Activated T-helper 1 cell treated with anti-CD3 and anti-CD28 coated beads, Interleukin-12 subunit alpha, Interleukin-12 subunit beta, Interleukin-2, Interleukin-4 antibody, amounts not matched to agents 30 ng/mL and 10 ng/mL and 1 ng/mL, durations not matched to agents 14 hours and 24 hours and 36 hours (primary cell): ENCODE measurements at regions of chr13 and their contacts with region 1.

Region 1: DNA sequence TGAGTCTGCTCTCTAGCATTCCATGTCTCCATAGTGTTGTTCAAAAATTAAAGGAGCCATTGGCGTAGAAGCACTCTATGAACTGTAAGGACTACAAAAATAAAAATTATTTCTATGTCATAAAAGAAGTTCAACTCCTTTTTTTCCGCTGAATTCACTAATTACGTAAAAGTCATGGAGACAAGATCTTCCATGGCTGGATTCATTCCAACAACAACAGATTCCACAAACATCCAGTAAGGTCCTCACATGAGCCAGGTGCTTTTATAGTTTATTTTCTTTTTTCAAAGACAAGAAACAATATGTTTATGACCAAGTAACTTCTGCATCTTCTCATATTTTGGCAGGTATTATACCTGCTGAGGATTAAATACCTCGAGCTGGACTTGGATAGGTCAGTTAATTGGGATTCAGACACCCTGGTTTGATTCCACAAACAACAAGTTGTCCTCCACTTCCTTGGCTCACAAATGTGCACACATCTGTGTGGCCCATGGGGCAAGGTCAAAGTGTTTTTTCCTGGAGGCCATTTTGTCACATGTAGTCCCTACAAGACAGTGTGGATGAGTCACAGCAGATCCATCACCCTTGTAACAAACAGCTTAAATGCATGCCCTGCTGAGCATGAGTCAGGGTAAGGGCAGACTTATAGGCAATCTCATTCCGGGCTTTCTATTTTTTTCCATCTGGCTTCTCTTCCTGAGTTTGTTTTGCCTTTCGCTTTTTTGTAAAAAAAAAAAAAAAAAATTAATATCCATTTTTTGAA is 475.6 kb downstream of the COG6 start:
- DNase-seq: no peak
- H3K4me3 Mint-ChIP-seq: no peak overlapping the region
- H3K27ac Mint-ChIP-seq: peak overlapping the region; percentile 12
- H3K4me1 Mint-ChIP-seq: peaks cover 63% of the 10 kb centered on the region
- H3K27me3 Mint-ChIP-seq: no peaks in the 10 kb centered on the region

Region 2: DNA sequence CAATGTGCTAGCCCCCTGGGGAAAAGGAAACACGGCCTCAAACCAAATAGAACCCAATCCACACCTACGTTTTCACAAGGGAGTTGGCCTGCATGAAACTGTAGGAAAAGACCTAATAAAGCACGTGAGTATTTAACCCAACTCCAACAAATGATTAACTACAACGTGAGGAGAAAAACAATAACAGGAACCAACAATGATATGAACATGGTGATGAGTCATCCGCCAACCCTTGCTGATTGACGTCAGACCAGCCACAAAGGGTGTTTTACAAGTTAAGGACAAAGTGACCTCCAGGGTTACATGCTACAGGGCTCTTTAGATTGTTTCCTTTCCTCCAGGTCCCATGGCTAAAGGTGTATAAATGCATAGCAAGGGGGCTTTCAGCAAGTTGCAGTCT is 15.0 kb before region 1 on chr13:
- intact Hi-C with region 1: loop called (anchors 2 kb)
- DNase-seq: peak; percentile 51
- H3K4me3 Mint-ChIP-seq: peak overlapping the region; percentile 24
- H3K27ac Mint-ChIP-seq: peak overlapping the region; percentile 91
- H3K4me1 Mint-ChIP-seq: peaks cover 43% of the 10 kb centered on the region
- H3K27me3 Mint-ChIP-seq: no peaks in the 10 kb centered on the region

Region 3: GRCh38 chr13:40329657-40330485 is 198.8 kb after region 1 on chr13:
- intact Hi-C with region 1: no loop called
- DNase-seq: no peak
- H3K4me3 Mint-ChIP-seq: no peak overlapping the region
- H3K27ac Mint-ChIP-seq: no peak overlapping the region
- H3K4me1 Mint-ChIP-seq: peaks cover 15% of the 10 kb centered on the region
- H3K27me3 Mint-ChIP-seq: peaks cover 1% of the 10 kb centered on the region